ENCODE measurements at regions of chr1 and their contacts with region 1.

Region 1: GRCh38 chr1:223331929-223332328 is 32.0 kb downstream of the SUSD4 start:
- DNase-seq: no peak
- ATAC-seq: no peak
- H3K4me3 ChIP-seq: no peak overlapping the region
- H3K27ac ChIP-seq: no peak overlapping the region
- H3K4me1 ChIP-seq: no peaks in the 10 kb centered on the region
- H3K27me3 ChIP-seq: no peaks in the 10 kb centered on the region
- CTCF ChIP-seq: no peak

Region 2: DNA sequence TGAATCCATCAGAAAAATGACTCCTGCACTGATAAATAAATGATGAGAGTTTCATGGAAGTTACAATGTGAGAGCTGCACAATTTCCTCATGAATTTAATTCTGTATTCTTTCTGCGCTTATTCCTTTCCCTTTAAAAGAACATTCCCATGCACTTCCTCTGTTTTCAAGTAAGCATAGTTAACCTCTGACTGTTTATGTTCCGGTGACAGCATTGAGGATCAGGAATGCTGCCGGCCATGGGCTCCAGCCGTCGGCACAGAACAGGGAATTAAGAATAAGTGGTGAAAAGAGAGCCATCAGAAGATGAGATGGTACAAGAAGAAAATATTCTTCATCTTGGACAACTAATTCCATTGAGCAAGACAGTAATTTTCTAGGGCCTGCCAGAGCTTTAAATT is 33.2 kb before region 1 on chr1:
- intact Hi-C with region 1: loop called in 1 of 10 experiments (anchors 1 kb)
- DNase-seq: no peak
- ATAC-seq: no peak
- H3K4me3 ChIP-seq: no peak overlapping the region
- H3K27ac ChIP-seq: no peak overlapping the region
- H3K4me1 ChIP-seq: no peaks in the 10 kb centered on the region
- H3K27me3 ChIP-seq: no peaks in the 10 kb centered on the region
- CTCF ChIP-seq: no peak